ENCODE measurements at regions of chr5 and their contacts with region 1.

Region 1: DNA sequence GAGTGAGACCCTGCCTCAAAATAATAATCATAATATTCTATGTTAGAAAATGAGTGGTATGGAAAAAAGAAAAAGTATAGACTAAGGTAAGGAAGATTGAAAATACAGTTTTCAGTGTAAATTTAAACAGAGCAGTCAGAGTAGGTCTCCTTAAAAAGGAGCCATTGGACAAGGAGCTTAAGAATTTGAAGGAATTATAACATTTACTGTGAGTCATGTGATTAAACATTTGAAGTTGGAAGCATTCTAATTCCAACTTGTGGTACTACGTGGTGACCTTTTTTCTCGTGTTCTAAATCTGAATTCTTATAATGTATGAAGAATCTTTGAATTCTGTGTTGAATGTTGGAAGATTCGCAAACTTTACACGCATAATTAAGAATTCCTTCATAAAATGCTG is 39.3 kb upstream of the TMEM171 start:
- DNase-seq: no peak
- ATAC-seq: no peak
- H3K4me3 ChIP-seq: no peak overlapping the region
- H3K27ac ChIP-seq: no peak overlapping the region
- H3K4me1 ChIP-seq: no peaks in the 10 kb centered on the region
- H3K27me3 ChIP-seq: no peaks in the 10 kb centered on the region
- CTCF ChIP-seq: no peak

Region 2: GRCh38 chr5:72920690-72921502 is 160.2 kb before region 1 on chr5:
- CTCF ChIA-PET with region 1: no interaction called
- POLR2A ChIA-PET with region 1: no interaction called
- in situ Hi-C with region 1: no loop called
- intact Hi-C with region 1: loop called (anchors 5 kb)
- DNase-seq: peak; percentile 45
- ATAC-seq: peak; percentile 83
- H3K4me3 ChIP-seq: no peak overlapping the region
- H3K27ac ChIP-seq: no peak overlapping the region
- H3K4me1 ChIP-seq: peaks cover 5% of the 10 kb centered on the region; the same call in 1 of the 2 replicates
- H3K27me3 ChIP-seq: no peaks in the 10 kb centered on the region
- CTCF ChIP-seq: peak; percentile 56; the same call in 1 of the 2 replicates